HepG2 (cell line): ENCODE measurements at regions of chr6 and their contacts with region 1.

Region 1: GRCh38 chr6:34656378-34657036 is 40.1 kb downstream of the ILRUN start:
- DNase-seq: peak; percentile 76
- ATAC-seq: peak; percentile 79
- H3K4me3 ChIP-seq: peak overlapping the region; percentile 62 to 71 (median 66); a peak in 5 of 6 replicates
- H3K27ac ChIP-seq: peak overlapping the region; percentile 91
- H3K4me1 ChIP-seq: peaks cover 70% of the 10 kb centered on the region
- H3K27me3 ChIP-seq: no peaks in the 10 kb centered on the region
- CTCF ChIP-seq: no peak
- EP300 ChIP-seq: peak in 1 of 2 experiments; percentile 14; a peak in 1 of 4 replicates
- POLR2A ChIP-seq: no peak
- RAD21 ChIP-seq: no peak

Region 2: DNA sequence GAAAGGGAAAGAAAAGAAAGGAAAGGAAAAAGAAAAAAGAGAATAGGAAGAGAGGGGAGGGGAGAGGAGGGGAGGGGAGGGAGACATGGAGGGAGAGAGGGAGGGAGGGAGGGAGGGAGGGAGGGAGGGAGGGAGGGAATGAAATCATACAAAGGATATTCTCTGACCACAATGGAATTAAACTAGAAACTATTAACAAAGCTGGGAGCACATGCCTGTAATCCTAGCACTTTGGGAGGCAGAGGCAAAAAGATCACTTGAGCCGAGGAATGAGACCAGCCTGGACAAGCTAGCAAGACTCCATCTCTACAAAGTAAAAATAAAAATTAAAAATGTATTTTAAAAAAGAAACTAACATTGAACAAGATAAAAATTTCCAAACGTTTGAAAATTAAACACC is 22.7 kb before region 1 on chr6:
- CTCF ChIA-PET with region 1: no interaction called
- POLR2A ChIA-PET with region 1: no interaction called
- in situ Hi-C with region 1: no loop called
- intact Hi-C with region 1: no loop called
- DNase-seq: no peak
- ATAC-seq: no peak
- H3K4me3 ChIP-seq: no peak overlapping the region
- H3K27ac ChIP-seq: no peak overlapping the region
- H3K4me1 ChIP-seq: peaks cover 6% of the 10 kb centered on the region
- H3K27me3 ChIP-seq: no peaks in the 10 kb centered on the region
- CTCF ChIP-seq: no peak
- EP300 ChIP-seq: no peak
- POLR2A ChIP-seq: no peak
- RAD21 ChIP-seq: no peak

Region 3: DNA sequence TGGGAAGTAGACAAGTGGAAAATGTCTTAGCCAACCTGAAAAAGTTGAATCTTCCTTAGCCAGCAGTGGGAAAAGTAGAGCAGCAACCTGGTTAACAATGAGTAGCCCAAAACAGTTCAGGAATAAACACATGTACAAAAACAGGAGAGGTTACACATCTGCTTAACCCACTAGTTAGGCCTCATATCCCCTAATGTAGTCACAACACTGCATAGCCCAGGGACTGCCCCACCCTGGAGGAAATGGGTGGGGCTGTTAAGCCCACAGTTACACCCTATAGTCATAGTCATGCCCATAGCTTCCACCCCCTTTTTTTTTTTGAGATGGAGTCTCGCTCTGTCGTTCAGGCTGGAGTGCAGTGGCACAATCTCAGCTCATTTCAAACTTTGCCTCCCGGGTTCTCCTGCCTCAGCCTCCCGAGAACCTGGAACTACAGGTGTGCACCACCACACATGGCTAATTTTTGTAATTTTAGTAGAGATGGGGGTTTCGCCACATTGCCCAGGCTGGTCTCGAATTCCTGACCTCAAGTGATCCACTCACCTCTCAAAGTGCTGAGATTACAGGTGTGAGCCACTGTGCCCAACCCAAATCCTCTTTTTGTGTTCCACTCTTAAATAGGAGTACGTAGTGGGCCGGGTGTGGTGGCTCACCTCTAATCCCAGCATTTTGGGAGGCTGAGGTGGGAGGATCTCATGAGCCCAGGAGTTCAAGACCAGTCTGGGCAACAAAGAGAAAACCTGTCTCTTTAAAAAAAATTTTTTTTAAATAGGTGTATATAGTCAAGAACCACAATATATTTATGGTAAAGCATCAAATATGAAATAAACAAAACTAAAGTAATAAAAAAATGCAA is 15.5 kb after region 1 on chr6:
- CTCF ChIA-PET with region 1: no interaction called
- POLR2A ChIA-PET with region 1: interaction called, 44 read pairs
- in situ Hi-C with region 1: no loop called
- intact Hi-C with region 1: no loop called
- DNase-seq: no peak
- ATAC-seq: no peak
- H3K4me3 ChIP-seq: no peak overlapping the region; a peak in 1 of 6 replicates
- H3K27ac ChIP-seq: peak overlapping the region; percentile 73
- H3K4me1 ChIP-seq: peaks cover 95% of the 10 kb centered on the region
- H3K27me3 ChIP-seq: no peaks in the 10 kb centered on the region
- CTCF ChIP-seq: no peak
- EP300 ChIP-seq: no peak
- POLR2A ChIP-seq: no peak
- RAD21 ChIP-seq: no peak

Region 4: DNA sequence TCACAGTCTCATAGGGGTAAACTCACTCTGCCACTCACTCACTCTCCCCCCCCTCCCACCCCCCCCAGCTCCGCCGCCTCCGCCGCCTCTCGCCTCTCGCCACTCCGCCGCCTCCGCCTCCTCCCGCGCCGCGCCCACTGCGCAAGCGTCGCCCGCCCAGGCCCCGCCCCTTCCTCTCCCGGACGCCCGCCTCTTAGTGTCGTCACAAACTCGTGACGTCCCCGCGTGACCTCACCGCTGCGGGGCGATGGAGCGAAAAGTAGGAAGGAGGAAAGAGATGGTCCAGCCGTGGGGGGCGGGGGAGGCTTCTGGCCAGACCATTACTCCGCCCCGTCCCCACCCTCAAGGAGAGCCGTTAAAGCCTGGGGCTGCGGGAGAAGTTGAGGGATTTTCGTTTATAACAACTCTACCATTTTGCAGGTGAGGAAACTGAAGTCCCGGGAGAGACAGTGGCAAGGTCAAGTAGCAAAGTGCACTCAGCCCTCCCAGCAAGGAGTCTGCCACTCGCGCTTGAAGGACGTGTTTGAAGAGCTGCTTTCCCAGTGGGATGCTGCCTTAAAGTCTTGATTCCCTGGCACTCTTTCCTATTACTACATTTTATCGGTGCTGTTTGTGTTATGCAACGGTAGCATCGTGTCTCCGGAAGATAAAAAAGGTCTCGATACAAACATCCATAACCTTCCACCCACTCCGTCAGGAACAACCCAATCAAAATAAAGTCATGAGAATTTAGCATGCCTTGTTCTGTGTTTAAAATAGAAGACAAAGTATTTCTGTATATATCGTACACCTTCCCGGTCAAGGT is 40.4 kb after region 1 on chr6 and contains the start of gene ILRUN:
- CTCF ChIA-PET with region 1: no interaction called
- POLR2A ChIA-PET with region 1: interaction called, 16 read pairs
- in situ Hi-C with region 1: no loop called
- intact Hi-C with region 1: loop called (anchors 2 kb)
- DNase-seq: peak; percentile 86
- ATAC-seq: peak; percentile 84
- H3K4me3 ChIP-seq: peak within 1 kb of the TSS; percentile 91 to 99 (median 98)
- H3K27ac ChIP-seq: peak within 1 kb of the TSS; percentile 82
- H3K4me1 ChIP-seq: peaks cover 52% of the 10 kb centered on the region
- H3K27me3 ChIP-seq: no peaks in the 10 kb centered on the region; a peak in 1 of 5 replicates
- CTCF ChIP-seq: 0 out of 2 replicates have a peak, but pooled peaks have one; percentile 11
- EP300 ChIP-seq: 0 out of 4 replicates have a peak, but pooled peaks of 1 of the 2 experiments have one; percentile 29
- POLR2A ChIP-seq: peak in 1 of 2 experiments; percentile 80; a peak in 2 of 4 replicates
- RAD21 ChIP-seq: no peak
- total RNA-seq, gene ILRUN: 66.6 and 90.8 TPM in 2 replicates

Region 5: DNA sequence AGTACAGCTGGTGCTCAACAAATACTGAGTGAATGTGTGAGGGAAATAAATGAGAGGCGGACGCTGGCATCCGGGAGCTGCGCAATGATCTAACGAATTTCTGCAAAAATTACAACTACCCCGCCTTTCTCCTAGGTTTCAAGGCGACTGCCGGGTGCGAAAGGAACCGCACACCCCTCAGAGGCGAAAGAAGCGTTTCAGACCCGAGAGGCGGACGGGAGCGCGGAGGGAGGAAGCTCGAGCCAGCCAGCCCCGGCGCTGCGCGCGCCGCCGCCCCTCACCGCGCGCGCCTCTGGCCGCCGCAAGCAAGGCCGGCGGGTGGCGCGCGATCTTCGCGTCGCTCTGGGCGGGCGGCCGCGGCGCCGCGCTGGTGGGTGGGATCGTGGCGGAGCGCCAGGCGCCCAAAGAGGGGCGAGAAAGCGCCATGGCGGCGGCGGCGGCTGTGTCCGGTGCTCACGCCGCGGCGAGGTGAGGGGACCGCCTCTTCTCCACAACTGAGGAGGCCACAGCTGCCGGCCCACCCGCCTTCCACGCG is 135.3 kb after region 1 on chr6 and contains the start of gene BLTP3A:
- CTCF ChIA-PET with region 1: no interaction called
- POLR2A ChIA-PET with region 1: interaction called, 23 read pairs
- in situ Hi-C with region 1: no loop called
- intact Hi-C with region 1: loop called (anchors 5 kb)
- DNase-seq: peak; percentile 59
- ATAC-seq: peak; percentile 90
- H3K4me3 ChIP-seq: peak within 1 kb of the TSS; percentile 88 to 100 (median 95)
- H3K27ac ChIP-seq: peak within 1 kb of the TSS; percentile 96
- H3K4me1 ChIP-seq: peaks cover 59% of the 10 kb centered on the region
- H3K27me3 ChIP-seq: no peaks in the 10 kb centered on the region; a peak in 1 of 5 replicates
- CTCF ChIP-seq: no peak; the same call in 1 of the 2 replicates
- EP300 ChIP-seq: no peak
- POLR2A ChIP-seq: peak; percentile 76 to 89
- RAD21 ChIP-seq: peak; percentile 57; the same call in 1 of the 2 replicates
- total RNA-seq, gene BLTP3A: 24.0 and 39.3 TPM in 2 replicates